CD8-positive, alpha-beta T cell (primary cell): ENCODE measurements at regions of chr5 and their contacts with region 1.

Region 1: DNA sequence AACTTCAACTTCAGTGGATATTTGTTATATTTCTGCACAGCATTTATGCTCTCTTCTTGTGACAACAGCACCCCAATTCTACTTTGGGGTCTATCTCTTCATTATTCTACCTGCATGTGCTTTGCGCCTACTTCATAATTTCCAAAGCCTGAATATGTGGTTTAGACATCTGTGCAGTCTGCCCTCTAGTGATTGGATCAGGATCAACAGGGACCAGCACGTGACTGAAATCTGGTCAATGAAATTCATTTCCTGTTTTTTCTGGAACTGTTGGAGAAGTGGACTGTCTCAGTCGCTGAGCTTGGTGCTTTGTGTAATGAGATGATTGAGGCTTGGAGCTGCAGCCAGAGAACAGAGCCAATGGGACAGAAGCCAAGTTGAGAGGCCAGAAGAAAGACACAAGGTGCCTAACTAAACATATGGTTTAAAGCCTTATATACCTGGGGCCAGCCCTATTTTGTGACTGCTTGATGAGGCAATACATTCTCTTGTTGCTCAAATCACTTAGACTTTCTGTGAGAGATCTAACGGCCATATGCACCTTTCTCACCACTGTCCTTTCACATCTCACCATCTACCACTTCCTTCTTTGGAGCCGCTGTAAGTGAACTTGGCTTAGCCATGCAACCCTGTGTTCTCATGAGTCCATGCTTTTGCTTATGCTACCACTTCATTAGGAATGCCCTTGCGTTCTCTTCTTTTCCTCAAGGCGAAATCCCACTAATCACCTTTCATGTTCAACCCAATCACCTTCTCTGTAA is 68.8 kb upstream of the PPP2R2B start:
- DNase-seq: peak in 3 of 9 experiments; percentile 6 to 54 (median 43)
- ATAC-seq: no peak
- H3K4me3 ChIP-seq: no peak overlapping the region
- H3K4me3 Mint-ChIP-seq: no peak overlapping the region
- H3K27ac ChIP-seq: no peak overlapping the region
- H3K27ac Mint-ChIP-seq: no peak overlapping the region
- H3K4me1 ChIP-seq: no peaks in the 10 kb centered on the region
- H3K4me1 Mint-ChIP-seq: peaks cover 6% of the 10 kb centered on the region
- H3K27me3 ChIP-seq: no peaks in the 10 kb centered on the region
- H3K27me3 Mint-ChIP-seq: peaks cover 6% of the 10 kb centered on the region
- CTCF ChIP-seq: no peak

Region 2: DNA sequence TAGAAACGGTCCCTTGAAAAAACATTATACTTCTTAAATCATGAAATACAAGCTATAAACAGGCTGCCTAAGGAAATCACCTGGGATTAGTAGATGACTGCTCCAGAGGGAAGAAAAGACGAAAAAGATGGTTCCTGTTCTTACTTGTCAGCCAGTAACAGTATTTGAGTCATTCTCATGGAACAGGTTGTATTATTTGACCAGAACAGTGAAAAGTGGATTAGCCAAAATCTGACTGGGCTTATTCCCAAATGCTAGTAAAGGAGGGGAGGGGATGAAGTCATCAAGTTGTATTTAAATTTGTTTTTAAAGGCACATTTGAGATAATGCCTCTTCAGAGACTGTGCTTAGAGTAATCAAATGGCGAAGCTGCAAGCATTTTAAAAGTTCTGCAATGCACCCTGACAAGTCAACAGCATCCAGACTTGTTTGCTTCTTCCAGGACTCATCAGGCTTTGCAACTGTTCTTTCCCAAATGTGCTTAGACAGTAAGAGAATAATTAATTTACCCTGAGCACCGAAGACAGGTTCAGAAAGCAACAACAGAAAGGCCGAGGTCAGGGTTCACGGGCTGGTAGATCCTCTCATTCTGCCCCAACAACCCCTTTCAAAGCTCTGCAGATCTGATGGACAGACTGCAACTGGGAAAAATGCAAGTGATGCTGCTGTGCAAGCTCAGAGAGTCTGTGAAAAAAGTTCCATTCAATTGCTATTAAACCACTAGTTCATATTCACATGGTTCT is 1976.1 kb before region 1 on chr5:
- CTCF ChIA-PET with region 1: no interaction called
- POLR2A ChIA-PET with region 1: no interaction called
- intact Hi-C with region 1: no loop called
- DNase-seq: no peak
- ATAC-seq: no peak
- H3K4me3 ChIP-seq: no peak overlapping the region
- H3K4me3 Mint-ChIP-seq: no peak overlapping the region
- H3K27ac ChIP-seq: no peak overlapping the region
- H3K27ac Mint-ChIP-seq: no peak overlapping the region
- H3K4me1 ChIP-seq: no peaks in the 10 kb centered on the region
- H3K4me1 Mint-ChIP-seq: no peaks in the 10 kb centered on the region
- H3K27me3 ChIP-seq: no peaks in the 10 kb centered on the region
- H3K27me3 Mint-ChIP-seq: no peaks in the 10 kb centered on the region
- CTCF ChIP-seq: no peak

Region 3: GRCh38 chr5:146894753-146895521 is 52.4 kb before region 1 on chr5:
- CTCF ChIA-PET with region 1: no interaction called
- POLR2A ChIA-PET with region 1: no interaction called
- intact Hi-C with region 1: loop called in 1 of 2 experiments (anchors 1 kb)
- DNase-seq: no peak
- ATAC-seq: no peak
- H3K4me3 ChIP-seq: no peak overlapping the region
- H3K4me3 Mint-ChIP-seq: no peak overlapping the region
- H3K27ac ChIP-seq: no peak overlapping the region
- H3K27ac Mint-ChIP-seq: no peak overlapping the region
- H3K4me1 ChIP-seq: peaks cover 4% of the 10 kb centered on the region
- H3K4me1 Mint-ChIP-seq: peaks cover 15% of the 10 kb centered on the region
- H3K27me3 ChIP-seq: no peaks in the 10 kb centered on the region
- H3K27me3 Mint-ChIP-seq: no peaks in the 10 kb centered on the region
- CTCF ChIP-seq: no peak

Region 4: GRCh38 chr5:147245381-147246165 is 298.2 kb after region 1 on chr5:
- CTCF ChIA-PET with region 1: no interaction called
- POLR2A ChIA-PET with region 1: no interaction called
- intact Hi-C with region 1: no loop called
- DNase-seq: no peak
- ATAC-seq: no peak
- H3K4me3 ChIP-seq: no peak overlapping the region
- H3K4me3 Mint-ChIP-seq: no peak overlapping the region
- H3K27ac ChIP-seq: no peak overlapping the region
- H3K27ac Mint-ChIP-seq: no peak overlapping the region
- H3K4me1 ChIP-seq: no peaks in the 10 kb centered on the region
- H3K4me1 Mint-ChIP-seq: no peaks in the 10 kb centered on the region
- H3K27me3 ChIP-seq: no peaks in the 10 kb centered on the region
- H3K27me3 Mint-ChIP-seq: no peaks in the 10 kb centered on the region
- CTCF ChIP-seq: no peak